IMR-90 (cell line): ENCODE measurements at regions of chr19 and their contacts with region 1.

Region 1: DNA sequence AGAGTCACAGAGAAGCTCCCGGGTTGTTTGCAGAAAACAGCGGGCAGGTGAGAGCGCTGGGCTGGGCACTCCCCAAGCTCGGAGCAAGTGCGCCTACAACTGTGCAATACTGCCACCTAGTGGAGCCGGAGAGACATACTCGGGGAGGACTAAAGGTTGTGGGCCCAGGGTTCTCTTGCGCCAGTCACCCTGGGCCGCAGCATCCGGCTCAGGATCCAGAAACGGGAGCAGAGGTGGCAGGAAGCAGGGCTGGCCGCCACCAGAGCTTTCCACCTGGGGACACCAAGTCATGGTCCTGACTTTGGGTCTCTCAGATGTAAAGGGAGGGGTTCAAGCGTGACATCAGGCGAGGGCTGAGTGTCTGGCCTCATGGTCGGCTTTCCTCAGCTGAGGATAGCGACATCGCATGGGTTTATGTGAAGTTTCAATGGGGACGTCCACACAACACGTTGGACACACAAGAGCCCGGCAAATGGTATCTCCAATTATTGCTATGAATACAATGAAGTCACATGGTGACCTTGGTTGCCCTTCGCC is 11.2 kb upstream of the KLK4 start:
- DNase-seq: peak; percentile 67
- ATAC-seq: peak; percentile 98
- H3K4me3 ChIP-seq: no peak overlapping the region
- H3K27ac ChIP-seq: no peak overlapping the region
- H3K4me1 ChIP-seq: no peaks in the 10 kb centered on the region
- H3K27me3 ChIP-seq: no peaks in the 10 kb centered on the region; the same call in 1 of the 2 replicates
- CTCF ChIP-seq: peak; percentile 82
- POLR2A ChIP-seq: no peak
- RAD21 ChIP-seq: peak; percentile 89

Region 2: DNA sequence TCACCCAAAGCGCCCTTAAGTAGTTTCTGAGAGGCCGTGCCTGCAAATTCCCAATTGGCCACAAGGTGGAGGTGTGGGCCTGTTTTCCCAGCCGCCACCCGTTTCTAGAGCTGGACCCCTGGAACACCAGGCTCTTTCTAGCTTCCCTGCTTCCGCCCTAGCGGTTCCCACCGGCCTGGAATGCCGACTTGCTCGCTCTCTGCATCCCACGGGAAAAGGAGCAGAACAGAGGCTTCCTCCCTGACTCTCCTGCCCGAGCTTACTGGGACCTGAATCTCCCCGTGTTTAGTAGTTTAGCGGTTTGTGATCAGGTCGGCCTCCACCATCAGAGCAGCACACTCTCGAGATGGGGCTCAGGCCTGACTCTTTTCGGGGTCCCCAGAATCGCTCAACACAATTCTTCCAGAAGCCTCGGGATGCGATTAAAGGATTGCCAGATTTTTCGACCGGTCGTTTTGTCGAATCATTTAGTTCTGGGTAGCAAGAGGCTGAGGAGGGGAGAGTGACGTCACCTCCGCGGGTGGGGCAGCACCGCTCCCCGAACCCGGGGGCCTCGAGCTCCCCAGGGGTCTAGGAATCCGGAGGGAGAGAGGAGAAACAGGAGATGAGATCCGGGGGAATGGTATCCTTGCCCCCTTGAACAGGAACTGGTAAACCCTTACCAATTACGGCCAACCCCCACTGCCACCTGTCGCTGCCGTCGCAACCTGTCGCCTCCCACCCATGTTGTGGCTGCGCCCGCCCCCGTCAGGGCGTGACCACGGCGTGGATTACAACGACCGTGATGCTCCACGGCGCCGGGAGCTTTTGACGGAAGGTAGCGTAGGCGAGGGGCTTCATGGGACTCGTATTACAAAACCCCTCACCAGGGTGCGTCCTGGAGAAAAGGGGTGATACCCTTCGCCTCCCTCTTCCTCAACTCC is 564.9 kb before region 1 on chr19:
- CTCF ChIA-PET with region 1: no interaction called
- POLR2A ChIA-PET with region 1: no interaction called
- dilution Hi-C with region 1: no loop called
- in situ Hi-C with region 1: loop called (anchors 10 kb)
- intact Hi-C with region 1: loop called (anchors 1 kb)
- DNase-seq: peak; percentile 41
- ATAC-seq: peak; percentile 96
- H3K4me3 ChIP-seq: peak overlapping the region; percentile 36
- H3K27ac ChIP-seq: no peak overlapping the region
- H3K4me1 ChIP-seq: no peaks in the 10 kb centered on the region
- H3K27me3 ChIP-seq: peaks cover 6% of the 10 kb centered on the region; the same call in 1 of the 2 replicates
- CTCF ChIP-seq: peak; percentile 75
- POLR2A ChIP-seq: no peak
- RAD21 ChIP-seq: peak; percentile 72

Region 3: GRCh38 chr19:50537762-50538230 is 384.6 kb before region 1 on chr19:
- CTCF ChIA-PET with region 1: no interaction called
- POLR2A ChIA-PET with region 1: no interaction called
- dilution Hi-C with region 1: no loop called
- in situ Hi-C with region 1: no loop called
- intact Hi-C with region 1: loop called (anchors 1 kb)
- DNase-seq: peak; percentile 71
- ATAC-seq: peak; percentile 99
- H3K4me3 ChIP-seq: no peak overlapping the region
- H3K27ac ChIP-seq: no peak overlapping the region
- H3K4me1 ChIP-seq: no peaks in the 10 kb centered on the region
- H3K27me3 ChIP-seq: no peaks in the 10 kb centered on the region; the same call in 1 of the 2 replicates
- CTCF ChIP-seq: peak; percentile 88
- POLR2A ChIP-seq: no peak
- RAD21 ChIP-seq: peak; percentile 68

Region 4: DNA sequence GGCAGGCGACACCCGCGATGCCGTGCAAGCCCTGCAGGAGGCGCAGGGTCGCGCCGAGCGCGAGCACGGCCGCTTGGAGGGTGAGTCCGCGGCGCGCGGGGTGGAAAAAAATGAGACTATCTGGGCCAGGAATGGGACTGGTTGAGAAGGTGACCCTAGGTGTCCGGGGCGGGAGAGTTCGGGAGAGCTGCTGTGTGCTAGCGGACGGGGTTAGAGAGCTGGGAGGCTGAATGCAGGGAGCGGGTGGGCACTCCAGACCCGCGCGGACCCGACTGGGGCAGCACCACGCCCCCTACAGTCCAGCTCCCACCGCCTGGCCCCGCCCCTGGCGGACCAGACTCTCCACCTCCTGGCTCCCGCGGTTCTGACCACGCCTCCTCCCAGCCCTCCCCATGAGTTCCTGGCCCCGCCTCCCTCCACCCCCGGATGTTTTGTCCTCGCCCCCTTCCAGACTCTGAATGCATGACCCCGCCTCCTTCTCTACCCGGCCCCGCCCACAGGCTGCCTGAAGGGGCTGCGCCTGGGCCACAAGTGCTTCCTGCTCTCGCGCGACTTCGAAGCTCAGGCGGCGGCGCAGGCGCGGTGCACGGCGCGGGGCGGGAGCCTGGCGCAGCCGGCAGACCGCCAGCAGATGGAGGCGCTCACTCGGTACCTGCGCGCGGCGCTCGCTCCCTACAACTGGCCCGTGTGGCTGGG is 197.7 kb before region 1 on chr19:
- CTCF ChIA-PET with region 1: no interaction called
- POLR2A ChIA-PET with region 1: no interaction called
- dilution Hi-C with region 1: no loop called
- in situ Hi-C with region 1: no loop called
- intact Hi-C with region 1: loop called (anchors 5 kb)
- DNase-seq: peak; percentile 99
- ATAC-seq: peak; percentile 86
- H3K4me3 ChIP-seq: peak overlapping the region; percentile 70
- H3K27ac ChIP-seq: peak overlapping the region; percentile 87
- H3K4me1 ChIP-seq: peaks cover 19% of the 10 kb centered on the region
- H3K27me3 ChIP-seq: no peaks in the 10 kb centered on the region
- CTCF ChIP-seq: peak; percentile 77
- POLR2A ChIP-seq: 0 out of 2 replicates have a peak, but pooled peaks have one; percentile 29
- RAD21 ChIP-seq: peak; percentile 38; the same call in 1 of the 2 replicates

Region 5: GRCh38 chr19:50906217-50906616 is 16.2 kb before region 1 on chr19:
- CTCF ChIA-PET with region 1: interaction called, 4 read pairs
- POLR2A ChIA-PET with region 1: no interaction called
- dilution Hi-C with region 1: no loop called
- in situ Hi-C with region 1: no loop called
- intact Hi-C with region 1: loop called (anchors 1 kb)
- DNase-seq: no peak
- ATAC-seq: no peak
- H3K4me3 ChIP-seq: no peak overlapping the region
- H3K27ac ChIP-seq: no peak overlapping the region
- H3K4me1 ChIP-seq: no peaks in the 10 kb centered on the region
- H3K27me3 ChIP-seq: peaks cover 5% of the 10 kb centered on the region
- CTCF ChIP-seq: peak; percentile 23
- POLR2A ChIP-seq: no peak
- RAD21 ChIP-seq: no peak

Region 6: GRCh38 chr19:51016798-51017683 is 94.7 kb after region 1 on chr19:
- CTCF ChIA-PET with region 1: no interaction called
- POLR2A ChIA-PET with region 1: no interaction called
- dilution Hi-C with region 1: no loop called
- in situ Hi-C with region 1: no loop called
- intact Hi-C with region 1: no loop called
- DNase-seq: peak; percentile 16
- ATAC-seq: peak; percentile 56
- H3K4me3 ChIP-seq: no peak overlapping the region
- H3K27ac ChIP-seq: no peak overlapping the region
- H3K4me1 ChIP-seq: no peaks in the 10 kb centered on the region
- H3K27me3 ChIP-seq: peaks cover 19% of the 10 kb centered on the region
- CTCF ChIP-seq: peak; percentile 43
- POLR2A ChIP-seq: no peak
- RAD21 ChIP-seq: 0 out of 2 replicates have a peak, but pooled peaks have one; percentile 13